ENCODE measurements at regions of chr4 and their contacts with region 1.

Region 1: DNA sequence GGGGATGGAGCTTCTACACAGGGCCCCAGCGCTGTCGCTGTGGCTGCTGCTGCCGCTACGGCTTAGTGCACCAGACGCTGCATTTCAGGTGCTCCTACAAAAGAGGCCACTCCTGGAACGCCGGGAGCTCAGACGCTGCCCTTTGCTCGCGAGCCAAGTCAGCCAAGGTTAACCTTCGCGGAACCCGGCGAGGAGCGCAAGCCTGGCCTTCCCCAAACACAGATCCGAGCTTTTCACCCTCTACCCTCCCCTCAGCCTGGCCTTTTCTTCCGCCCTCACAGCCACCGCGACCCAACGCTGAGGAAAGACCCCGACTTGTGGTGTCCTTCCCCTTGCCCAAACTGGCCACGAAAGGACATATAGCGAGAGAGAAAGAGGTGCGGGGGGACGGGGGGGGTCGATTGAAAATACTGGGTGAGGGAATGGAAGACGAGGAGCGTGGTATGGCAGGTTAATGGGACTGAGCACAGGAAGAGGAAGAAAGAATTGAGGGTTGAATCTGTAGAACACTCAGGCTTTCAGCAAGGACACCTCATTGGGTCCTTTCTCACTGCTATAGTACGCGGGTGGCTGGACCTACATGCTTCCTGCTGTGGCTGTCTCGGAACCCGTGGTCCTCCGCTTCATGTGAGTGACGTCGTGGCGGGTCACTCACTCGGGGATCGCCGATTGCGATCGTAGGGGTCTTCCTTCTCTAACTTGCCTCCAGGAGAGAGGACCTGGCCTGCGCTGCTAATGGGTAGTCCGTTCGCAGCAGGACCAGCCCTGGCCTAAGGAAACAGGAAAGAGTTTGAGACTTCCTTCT is at the starts of genes AIMP1 and TBCK:
- H3K4me3 Mint-ChIP-seq: peak within 1 kb of the TSS; percentile 69
- H3K27ac Mint-ChIP-seq: no peak within 1 kb of the TSS
- H3K4me1 Mint-ChIP-seq: peaks cover 16% of the 10 kb centered on the region
- H3K27me3 Mint-ChIP-seq: no peaks in the 10 kb centered on the region

Region 2: DNA sequence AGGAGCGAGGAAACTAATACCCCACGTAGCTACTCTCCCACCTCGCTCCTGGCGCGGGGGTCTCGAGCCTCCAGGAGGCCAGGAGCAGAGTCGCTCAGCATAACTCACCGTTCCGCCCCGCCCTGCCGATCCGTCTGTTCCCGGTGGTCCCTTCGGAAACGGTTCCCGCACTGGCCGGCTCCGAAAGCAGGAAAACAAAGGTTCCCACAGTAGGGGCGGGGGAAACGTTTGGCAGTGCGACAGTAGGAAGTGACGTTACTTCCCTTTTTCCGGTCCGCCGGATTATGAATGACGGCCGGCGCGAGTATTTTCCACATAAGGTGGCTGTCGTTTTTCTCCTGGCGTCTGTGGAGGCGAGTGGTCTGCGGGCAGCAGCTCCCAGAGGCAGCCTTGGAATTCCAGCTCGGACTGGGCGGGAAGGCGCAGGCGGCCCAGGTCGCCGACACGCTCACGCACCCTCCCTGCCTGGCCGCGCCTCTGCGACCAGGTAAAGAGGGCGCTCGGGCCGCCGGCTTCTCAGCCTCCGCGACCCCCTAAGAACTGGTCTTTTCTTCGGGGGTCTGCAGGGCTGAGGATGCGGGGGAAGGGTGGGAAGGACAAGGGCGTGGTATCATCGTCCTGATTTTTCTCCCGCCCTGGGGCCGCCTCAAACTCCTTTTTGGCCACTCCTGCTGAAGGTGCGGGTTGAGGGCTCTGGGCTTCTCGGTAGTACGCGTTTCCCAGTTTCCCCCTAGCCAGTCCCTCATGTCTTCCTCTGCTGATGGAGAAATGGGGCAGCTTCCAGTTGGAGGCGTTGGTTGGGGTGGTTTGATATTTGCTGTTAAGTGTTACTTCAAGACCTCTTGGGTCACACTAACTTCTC is 607.4 kb before region 1 on chr4 and contains the starts of genes GSTCD and INTS12:
- intact Hi-C with region 1: loop called (anchors 5 kb)
- H3K4me3 Mint-ChIP-seq: peak within 1 kb of the TSS; percentile 94
- H3K27ac Mint-ChIP-seq: peak within 1 kb of the TSS; percentile 93
- H3K4me1 Mint-ChIP-seq: peaks cover 27% of the 10 kb centered on the region
- H3K27me3 Mint-ChIP-seq: no peaks in the 10 kb centered on the region